Activated CD4-positive, alpha-beta T cell treated with anti-CD3 and anti-CD28 coated beads, Interleukin-2, amount 10 ng/mL, durations not matched to agents 7 days and 5 days (primary cell): ENCODE measurements at regions of chr3 and their contacts with region 1.

Region 1: DNA sequence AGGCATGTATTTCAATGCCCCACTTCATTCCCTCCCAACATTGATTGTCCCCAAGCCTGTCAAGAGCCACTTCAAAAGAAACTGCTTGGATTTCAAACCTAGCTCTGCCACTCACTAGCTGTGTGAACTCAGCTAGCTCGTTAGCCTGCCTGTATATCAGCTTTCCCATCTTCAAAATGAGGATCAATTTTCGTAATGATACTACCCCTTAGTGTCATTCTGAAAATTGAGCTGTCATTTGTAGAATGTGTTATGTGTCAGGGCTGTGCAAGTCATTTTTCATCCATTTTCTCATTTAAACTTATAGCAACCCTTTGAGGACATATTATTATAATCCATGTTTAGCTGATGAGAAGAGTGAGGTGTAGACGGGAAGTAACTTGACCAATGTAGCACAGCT is 88.6 kb downstream of the TRIM42 start:
- DNase-seq: no peak
- H3K4me3 Mint-ChIP-seq: no peak overlapping the region
- H3K27ac Mint-ChIP-seq: no peak overlapping the region
- H3K4me1 Mint-ChIP-seq: peaks cover 16% of the 10 kb centered on the region
- H3K27me3 Mint-ChIP-seq: peaks cover 9% of the 10 kb centered on the region

Region 2: GRCh38 chr3:140341203-140341602 is 425.3 kb before region 1 on chr3:
- CTCF ChIA-PET with region 1: no interaction called
- POLR2A ChIA-PET with region 1: interaction called, 11 read pairs
- DNase-seq: no peak
- H3K4me3 Mint-ChIP-seq: no peak overlapping the region
- H3K27ac Mint-ChIP-seq: no peak overlapping the region
- H3K4me1 Mint-ChIP-seq: no peaks in the 10 kb centered on the region
- H3K27me3 Mint-ChIP-seq: peaks cover 2% of the 10 kb centered on the region

Region 3: DNA sequence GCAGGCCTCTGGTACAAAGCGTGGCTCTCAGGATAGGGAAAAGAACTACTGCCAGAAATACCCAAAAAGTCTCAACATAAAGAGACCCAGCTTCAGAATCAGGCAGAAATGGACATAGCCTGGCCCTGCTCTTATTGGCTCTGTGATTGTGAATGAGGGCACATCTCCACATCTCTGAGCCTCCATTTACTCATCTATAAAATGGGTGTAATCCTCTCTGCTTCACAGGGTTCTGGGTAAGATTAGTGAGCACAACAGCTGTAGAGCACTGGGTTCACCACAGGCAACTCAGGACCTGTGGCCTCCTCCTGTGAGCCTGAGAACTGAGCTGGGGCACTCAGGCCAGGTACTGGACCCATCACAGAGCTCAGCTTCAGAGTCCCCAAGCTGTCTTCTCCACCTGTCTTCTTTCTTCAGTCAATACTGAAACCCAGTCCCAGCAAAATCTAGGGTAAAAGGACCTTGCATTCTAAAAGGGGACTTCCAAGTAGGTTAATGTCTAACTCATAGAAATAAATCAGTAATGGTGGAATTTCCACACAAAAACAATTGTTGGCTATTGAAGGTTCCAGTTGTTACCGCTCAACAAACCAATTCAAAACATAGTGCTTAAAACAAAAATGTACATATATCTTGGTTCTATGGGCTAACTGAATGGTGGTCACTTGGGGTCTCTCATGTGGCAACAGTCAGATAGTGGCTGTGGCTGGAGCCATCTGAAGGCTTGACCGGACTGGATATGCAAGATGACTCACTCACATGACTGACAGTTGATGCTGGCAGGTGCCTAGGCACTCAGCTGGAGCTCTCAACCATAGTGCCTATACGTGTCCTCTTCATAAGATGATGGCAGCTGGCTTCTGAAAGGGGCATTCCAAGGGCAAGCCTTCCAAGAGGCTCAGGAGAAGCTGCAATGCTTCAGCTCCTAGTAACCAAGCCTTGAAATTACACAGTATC is 41.3 kb before region 1 on chr3:
- CTCF ChIA-PET with region 1: no interaction called
- POLR2A ChIA-PET with region 1: no interaction called
- DNase-seq: no peak
- H3K4me3 Mint-ChIP-seq: no peak overlapping the region
- H3K27ac Mint-ChIP-seq: no peak overlapping the region
- H3K4me1 Mint-ChIP-seq: peaks cover 9% of the 10 kb centered on the region
- H3K27me3 Mint-ChIP-seq: peaks cover 7% of the 10 kb centered on the region

Region 4: GRCh38 chr3:140736863-140737460 is 29.5 kb before region 1 on chr3:
- CTCF ChIA-PET with region 1: no interaction called
- POLR2A ChIA-PET with region 1: no interaction called
- DNase-seq: no peak
- H3K4me3 Mint-ChIP-seq: no peak overlapping the region
- H3K27ac Mint-ChIP-seq: no peak overlapping the region
- H3K4me1 Mint-ChIP-seq: peaks cover 6% of the 10 kb centered on the region
- H3K27me3 Mint-ChIP-seq: peaks cover 16% of the 10 kb centered on the region

Region 5: DNA sequence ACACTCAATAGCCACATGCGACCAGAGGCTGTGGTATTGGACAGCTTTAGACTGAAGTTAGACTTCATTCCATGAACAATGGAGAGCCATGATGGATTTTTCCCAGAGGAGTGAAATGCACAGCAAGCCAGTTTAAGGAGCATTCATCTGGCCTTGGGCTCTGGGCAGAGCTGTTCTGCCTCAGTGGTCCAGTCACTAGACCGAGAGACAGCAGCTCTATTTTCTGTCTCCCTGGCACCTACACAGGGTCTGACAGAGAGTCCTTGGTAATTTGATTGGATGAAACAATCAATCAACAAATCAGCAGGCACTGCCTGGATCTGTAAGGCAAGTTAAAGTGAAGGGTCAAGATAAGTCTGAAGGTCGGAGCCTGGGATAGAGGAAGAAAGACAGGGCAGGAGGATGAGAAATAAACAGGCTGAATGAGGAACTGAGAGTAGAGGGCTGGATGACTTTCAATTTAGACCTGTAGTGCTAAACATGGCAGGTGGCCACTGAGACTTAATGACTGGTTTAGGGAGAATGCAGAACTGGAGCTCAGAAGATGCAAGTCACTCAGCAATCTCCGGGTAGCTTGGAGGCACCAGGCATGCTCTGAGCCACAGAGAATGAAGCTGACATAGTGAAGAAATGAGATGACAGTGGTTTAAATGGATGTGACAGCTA is 76.7 kb after region 1 on chr3:
- CTCF ChIA-PET with region 1: no interaction called
- POLR2A ChIA-PET with region 1: no interaction called
- DNase-seq: no peak
- H3K4me3 Mint-ChIP-seq: no peak overlapping the region
- H3K27ac Mint-ChIP-seq: no peak overlapping the region
- H3K4me1 Mint-ChIP-seq: peaks cover 13% of the 10 kb centered on the region
- H3K27me3 Mint-ChIP-seq: peaks cover 10% of the 10 kb centered on the region